K562 (cell line): ENCODE measurements at regions of chr1 and their contacts with region 1.

Region 1: DNA sequence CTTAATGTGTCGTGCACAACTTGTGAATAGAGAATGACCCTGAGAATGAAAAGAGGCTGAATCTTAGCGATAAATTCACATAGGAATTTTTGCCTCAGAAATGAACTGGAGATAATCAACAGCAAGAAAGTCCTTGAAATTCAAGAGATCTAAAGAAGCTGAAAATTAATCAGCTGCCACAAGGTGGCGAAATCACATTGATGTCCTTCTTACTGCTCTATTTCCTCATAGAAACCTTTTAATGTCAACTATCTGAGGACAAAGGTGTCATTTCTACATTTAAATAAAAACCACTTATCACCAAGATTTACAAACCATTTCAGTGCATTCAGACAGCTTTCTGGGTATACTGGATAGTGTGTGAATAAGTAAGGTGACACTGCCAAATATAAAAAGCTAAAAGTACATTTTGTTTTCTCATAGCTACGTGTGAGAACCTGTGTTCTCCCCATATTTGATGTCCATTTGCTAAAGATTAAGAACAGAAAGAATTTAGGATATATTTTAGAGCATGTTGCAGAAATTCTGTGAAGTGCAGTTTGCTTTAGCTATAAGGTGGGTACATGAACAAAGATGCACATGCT is 485.3 kb upstream of the PTBP2 start:
- DNase-seq: peak in 3 of 4 experiments; percentile 6 to 11 (median 9)
- ATAC-seq: no peak
- H3K4me3 ChIP-seq: no peak overlapping the region
- H3K27ac ChIP-seq: no peak overlapping the region
- H3K4me1 ChIP-seq: no peaks in the 10 kb centered on the region
- H3K27me3 ChIP-seq: no peaks in the 10 kb centered on the region
- CTCF ChIP-seq: peak in 1 of 3 experiments; percentile 19; a peak in 1 of 6 replicates
- EP300 ChIP-seq: no peak
- POLR2A ChIP-seq: no peak
- RAD21 ChIP-seq: peak in 1 of 2 experiments; percentile 38; a peak in 1 of 4 replicates

Region 2: DNA sequence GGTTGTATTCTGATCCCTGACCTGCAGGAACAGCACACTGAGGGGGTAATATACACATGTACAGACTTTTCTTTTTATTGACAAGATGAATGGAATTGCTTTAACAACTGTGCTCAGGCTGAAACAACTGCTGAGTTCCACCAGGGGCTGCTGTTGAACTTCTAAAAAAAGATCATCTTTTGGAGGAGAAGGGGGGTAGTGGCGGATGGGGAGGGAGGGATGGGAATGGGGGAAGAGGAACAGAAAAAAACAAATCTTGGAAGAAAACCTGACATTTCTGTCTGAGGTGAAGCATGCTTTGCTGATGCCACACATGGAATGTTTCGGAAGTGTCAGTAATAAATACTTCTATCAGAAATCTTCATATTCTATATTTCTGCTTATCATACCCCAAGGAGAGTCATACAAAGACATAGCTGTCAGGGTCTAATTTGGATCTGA is 927.2 kb before region 1 on chr1:
- CTCF ChIA-PET with region 1: no interaction called
- POLR2A ChIA-PET with region 1: no interaction called
- in situ Hi-C with region 1: no loop called
- intact Hi-C with region 1: loop called (anchors 5 kb)
- DNase-seq: peak; percentile 44 to 59 (median 55)
- ATAC-seq: peak; percentile 91
- H3K4me3 ChIP-seq: no peak overlapping the region
- H3K27ac ChIP-seq: no peak overlapping the region
- H3K4me1 ChIP-seq: no peaks in the 10 kb centered on the region
- H3K27me3 ChIP-seq: no peaks in the 10 kb centered on the region; a peak in 1 of 5 replicates
- CTCF ChIP-seq: peak; percentile 54 to 71 (median 59)
- EP300 ChIP-seq: no peak
- POLR2A ChIP-seq: no peak
- RAD21 ChIP-seq: peak in 1 of 2 experiments; percentile 64; a peak in 3 of 4 replicates

Region 3: DNA sequence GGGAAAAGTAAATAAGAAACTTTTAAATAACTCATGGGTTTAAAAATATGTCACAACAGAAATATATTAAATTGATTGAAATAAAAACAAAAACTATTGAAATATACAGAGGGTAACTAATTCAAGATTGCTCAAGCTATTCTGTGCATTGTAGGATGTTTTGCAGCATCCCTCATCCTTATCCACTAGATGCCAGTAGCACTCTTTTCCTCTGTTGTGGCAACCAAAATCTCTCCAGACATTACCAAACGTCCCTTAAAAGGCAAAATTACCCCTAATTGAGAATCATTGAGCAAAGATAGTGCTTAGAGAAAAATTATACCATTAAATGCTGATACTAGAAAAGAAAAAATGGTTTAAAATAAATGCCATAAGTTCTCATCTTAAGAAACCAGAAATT is 319.6 kb before region 1 on chr1:
- CTCF ChIA-PET with region 1: no interaction called
- POLR2A ChIA-PET with region 1: no interaction called
- in situ Hi-C with region 1: no loop called
- intact Hi-C with region 1: no loop called
- DNase-seq: no peak
- ATAC-seq: no peak
- H3K4me3 ChIP-seq: no peak overlapping the region
- H3K27ac ChIP-seq: no peak overlapping the region
- H3K4me1 ChIP-seq: no peaks in the 10 kb centered on the region
- H3K27me3 ChIP-seq: no peaks in the 10 kb centered on the region
- CTCF ChIP-seq: no peak
- EP300 ChIP-seq: no peak
- POLR2A ChIP-seq: no peak
- RAD21 ChIP-seq: no peak

Region 4: GRCh38 chr1:96130432-96130831 is 105.8 kb before region 1 on chr1:
- CTCF ChIA-PET with region 1: no interaction called
- POLR2A ChIA-PET with region 1: no interaction called
- in situ Hi-C with region 1: no loop called
- intact Hi-C with region 1: no loop called
- DNase-seq: no peak
- ATAC-seq: no peak
- H3K4me3 ChIP-seq: no peak overlapping the region
- H3K27ac ChIP-seq: no peak overlapping the region
- H3K4me1 ChIP-seq: no peaks in the 10 kb centered on the region
- H3K27me3 ChIP-seq: no peaks in the 10 kb centered on the region
- CTCF ChIP-seq: no peak
- EP300 ChIP-seq: no peak
- POLR2A ChIP-seq: no peak
- RAD21 ChIP-seq: no peak

Region 5: GRCh38 chr1:96845464-96845863 is 609.2 kb after region 1 on chr1:
- CTCF ChIA-PET with region 1: interaction called, 4 read pairs
- POLR2A ChIA-PET with region 1: no interaction called
- in situ Hi-C with region 1: no loop called
- intact Hi-C with region 1: loop called (anchors 5 kb)
- DNase-seq: peak; percentile 53 to 69 (median 57)
- ATAC-seq: peak; percentile 100
- H3K4me3 ChIP-seq: no peak overlapping the region
- H3K27ac ChIP-seq: no peak overlapping the region
- H3K4me1 ChIP-seq: no peaks in the 10 kb centered on the region
- H3K27me3 ChIP-seq: no peaks in the 10 kb centered on the region; a peak in 1 of 5 replicates
- CTCF ChIP-seq: peak; percentile 77 to 93 (median 80)
- EP300 ChIP-seq: no peak
- POLR2A ChIP-seq: no peak
- RAD21 ChIP-seq: peak; percentile 65 to 75